Activated CD8-positive, alpha-beta T cell treated with anti-CD3 and anti-CD28 coated beads, Interleukin-2, amount 10 ng/mL, durations not matched to agents 7 days and 5 days (primary cell): ENCODE measurements at regions of chr11 and their contacts with region 1.

Region 1: GRCh38 chr11:76207642-76208401 is 1.5 kb upstream of the WNT11 start:
- DNase-seq: peak; percentile 79
- ATAC-seq: peak; percentile 73
- H3K4me3 Mint-ChIP-seq: peak overlapping the region; percentile 74
- H3K27ac Mint-ChIP-seq: no peak overlapping the region
- H3K4me1 Mint-ChIP-seq: peaks cover 23% of the 10 kb centered on the region
- H3K27me3 Mint-ChIP-seq: peaks cover 55% of the 10 kb centered on the region

Region 2: GRCh38 chr11:75896843-75897419 is 310.9 kb before region 1 on chr11:
- CTCF ChIA-PET with region 1: interaction called, 11 read pairs
- POLR2A ChIA-PET with region 1: interaction called, 3 read pairs
- DNase-seq: no peak
- ATAC-seq: no peak
- H3K4me3 Mint-ChIP-seq: no peak overlapping the region
- H3K27ac Mint-ChIP-seq: no peak overlapping the region
- H3K4me1 Mint-ChIP-seq: peaks cover 2% of the 10 kb centered on the region
- H3K27me3 Mint-ChIP-seq: no peaks in the 10 kb centered on the region

Region 3: DNA sequence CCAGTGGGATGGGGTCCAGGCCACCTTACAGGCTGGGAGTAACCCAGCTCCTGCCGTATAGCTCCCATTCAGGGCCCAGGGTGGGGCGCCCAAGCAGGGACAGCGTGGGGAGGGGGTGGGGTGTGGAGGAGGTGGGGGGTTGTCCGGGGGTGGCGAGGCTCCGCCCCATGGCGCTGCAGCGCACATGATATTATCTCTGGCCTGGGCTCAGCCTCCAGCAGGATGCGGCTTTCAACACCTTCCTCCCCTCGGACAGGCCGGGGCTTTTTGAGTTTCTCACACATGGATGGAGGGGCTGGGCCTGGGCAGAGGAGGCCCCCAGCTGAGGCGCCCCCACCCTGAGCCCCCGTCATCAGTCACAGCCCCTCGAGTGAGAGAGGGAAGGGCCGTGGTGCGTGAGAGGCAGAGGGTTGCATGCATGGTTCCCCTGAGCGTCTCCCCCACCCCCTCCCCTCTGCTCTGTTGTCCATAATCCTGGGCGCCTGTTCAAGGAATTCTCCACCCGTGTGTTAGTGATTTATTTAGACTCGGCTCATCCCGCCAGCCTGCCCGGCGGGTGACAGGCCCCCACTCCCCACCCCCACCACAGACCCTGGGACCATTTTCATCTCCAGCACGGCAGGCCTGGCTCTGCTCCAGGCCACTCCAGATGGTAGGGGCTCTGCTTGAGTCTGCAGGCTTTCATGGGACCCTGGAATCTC is 46.4 kb before region 1 on chr11:
- CTCF ChIA-PET with region 1: no interaction called
- POLR2A ChIA-PET with region 1: no interaction called
- DNase-seq: no peak
- ATAC-seq: no peak
- H3K4me3 Mint-ChIP-seq: no peak overlapping the region
- H3K27ac Mint-ChIP-seq: no peak overlapping the region
- H3K4me1 Mint-ChIP-seq: peaks cover 4% of the 10 kb centered on the region
- H3K27me3 Mint-ChIP-seq: no peaks in the 10 kb centered on the region

Region 4: GRCh38 chr11:76185931-76186401 is 21.9 kb before region 1 on chr11:
- CTCF ChIA-PET with region 1: interaction called, 11 read pairs
- POLR2A ChIA-PET with region 1: no interaction called
- DNase-seq: no peak
- ATAC-seq: no peak
- H3K4me3 Mint-ChIP-seq: no peak overlapping the region
- H3K27ac Mint-ChIP-seq: no peak overlapping the region
- H3K4me1 Mint-ChIP-seq: no peaks in the 10 kb centered on the region
- H3K27me3 Mint-ChIP-seq: no peaks in the 10 kb centered on the region

Region 5: GRCh38 chr11:76235233-76236091 is 27.6 kb after region 1 on chr11:
- CTCF ChIA-PET with region 1: interaction called, 72 read pairs
- POLR2A ChIA-PET with region 1: interaction called, 10 read pairs
- DNase-seq: peak; percentile 94
- ATAC-seq: peak; percentile 89
- H3K4me3 Mint-ChIP-seq: peak overlapping the region; percentile 78
- H3K27ac Mint-ChIP-seq: peak overlapping the region; percentile 90
- H3K4me1 Mint-ChIP-seq: peaks cover 64% of the 10 kb centered on the region
- H3K27me3 Mint-ChIP-seq: peaks cover 6% of the 10 kb centered on the region

Region 6: DNA sequence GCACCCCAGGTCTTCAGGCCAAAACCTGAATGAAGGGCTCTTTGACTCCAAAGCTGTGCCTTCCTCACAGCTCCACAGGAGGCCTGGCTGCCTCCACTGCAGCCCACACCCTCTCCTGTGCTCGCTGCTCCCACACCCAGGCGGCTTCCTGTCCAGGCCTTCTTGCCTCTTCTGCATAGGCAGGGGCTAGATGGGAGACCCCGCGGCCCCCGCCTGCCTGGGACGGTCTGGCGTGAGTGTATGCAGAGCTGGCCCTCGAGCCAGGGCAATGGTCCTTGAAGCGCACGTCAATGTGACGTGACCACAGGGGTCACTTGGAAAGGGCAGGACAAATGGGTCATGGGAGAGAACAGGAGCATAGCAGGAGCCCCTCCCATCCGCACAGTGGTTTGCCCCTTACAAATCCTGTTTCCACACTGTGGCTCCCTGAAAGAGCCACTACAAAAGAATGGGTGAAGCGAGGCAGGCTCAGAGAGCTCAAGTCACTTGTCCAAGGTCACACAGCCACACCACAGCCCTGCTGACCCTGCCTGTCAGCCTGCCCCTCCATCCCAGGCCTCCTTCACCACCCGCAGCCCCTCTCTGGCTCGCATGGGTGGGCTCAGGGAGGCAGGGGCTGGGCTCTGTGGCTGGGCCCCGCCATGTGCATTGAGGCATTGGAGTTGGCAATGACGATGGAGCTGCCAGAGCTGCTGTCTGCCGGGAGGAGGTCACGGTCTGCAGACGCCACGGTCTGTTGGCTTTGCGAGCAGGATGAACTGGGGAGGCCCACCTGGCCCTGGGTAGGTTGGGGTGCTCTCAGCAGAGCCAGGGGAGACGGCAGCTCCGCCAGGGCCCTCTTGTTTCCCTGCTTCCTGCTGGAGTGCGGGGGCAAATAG is 69.7 kb after region 1 on chr11:
- CTCF ChIA-PET with region 1: no interaction called
- POLR2A ChIA-PET with region 1: no interaction called
- DNase-seq: no peak
- ATAC-seq: no peak
- H3K4me3 Mint-ChIP-seq: no peak overlapping the region
- H3K27ac Mint-ChIP-seq: no peak overlapping the region
- H3K4me1 Mint-ChIP-seq: peaks cover 6% of the 10 kb centered on the region
- H3K27me3 Mint-ChIP-seq: peaks cover 7% of the 10 kb centered on the region

Region 7: DNA sequence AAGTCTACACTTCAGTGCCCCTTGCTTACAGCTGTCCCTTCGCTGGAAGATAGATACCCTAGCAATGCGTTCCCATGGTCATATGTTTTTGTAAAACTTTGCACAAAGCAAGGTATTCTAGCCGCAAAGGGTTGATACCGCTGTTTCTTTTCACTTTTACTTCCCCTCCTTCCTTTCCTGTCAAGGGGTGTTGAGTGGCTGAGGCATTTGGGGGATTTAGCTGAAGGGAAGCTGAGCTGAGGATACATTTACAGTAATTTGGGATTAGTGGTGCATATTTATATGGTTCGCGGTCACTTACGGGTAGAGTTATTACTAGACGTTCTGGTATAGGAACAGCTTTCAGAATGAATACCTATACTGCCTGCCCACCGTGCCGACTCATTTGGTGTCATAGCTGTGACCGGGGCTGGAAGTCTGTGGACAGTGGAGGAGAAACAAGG is 85.4 kb after region 1 on chr11:
- CTCF ChIA-PET with region 1: interaction called, 41 read pairs
- POLR2A ChIA-PET with region 1: interaction called, 3 read pairs
- DNase-seq: peak; percentile 35
- ATAC-seq: peak; percentile 41
- H3K4me3 Mint-ChIP-seq: peak overlapping the region; percentile 16
- H3K27ac Mint-ChIP-seq: peak overlapping the region; percentile 47
- H3K4me1 Mint-ChIP-seq: peaks cover 27% of the 10 kb centered on the region
- H3K27me3 Mint-ChIP-seq: no peaks in the 10 kb centered on the region

Region 8: GRCh38 chr11:76318744-76319384 is 111.0 kb after region 1 on chr11:
- CTCF ChIA-PET with region 1: interaction called, 206 read pairs
- POLR2A ChIA-PET with region 1: no interaction called
- DNase-seq: peak; percentile 87
- ATAC-seq: peak; percentile 96
- H3K4me3 Mint-ChIP-seq: no peak overlapping the region
- H3K27ac Mint-ChIP-seq: no peak overlapping the region
- H3K4me1 Mint-ChIP-seq: no peaks in the 10 kb centered on the region
- H3K27me3 Mint-ChIP-seq: peaks cover 35% of the 10 kb centered on the region

Region 9: GRCh38 chr11:76445124-76446084 is 237.6 kb after region 1 on chr11:
- CTCF ChIA-PET with region 1: interaction called, 11 read pairs
- POLR2A ChIA-PET with region 1: no interaction called
- DNase-seq: peak; percentile 63
- ATAC-seq: peak; percentile 51
- H3K4me3 Mint-ChIP-seq: peak overlapping the region; percentile 88
- H3K27ac Mint-ChIP-seq: peak overlapping the region; percentile 97
- H3K4me1 Mint-ChIP-seq: peaks cover 29% of the 10 kb centered on the region
- H3K27me3 Mint-ChIP-seq: no peaks in the 10 kb centered on the region